A549 (cell line): ENCODE measurements at regions of chr14 and their contacts with region 1.

Region 1: GRCh38 chr14:22375321-22375930 is 213.6 kb downstream of the DAD1 start:
- DNase-seq: peak; percentile 21 to 70
- ATAC-seq: peak in 1 of 2 experiments; percentile 74; a peak in 3 of 6 replicates
- H3K4me3 ChIP-seq: no peak overlapping the region
- H3K27ac ChIP-seq: no peak overlapping the region
- H3K4me1 ChIP-seq: peaks cover under 1% of the 10 kb centered on the region; the same call in 2 of the 3 replicates
- CTCF ChIP-seq: peak; percentile 90
- EP300 ChIP-seq: no peak
- POLR2A ChIP-seq: no peak
- RAD21 ChIP-seq: peak; percentile 80 to 85

Region 2: GRCh38 chr14:22314181-22314820 is 61.1 kb before region 1 on chr14:
- CTCF ChIA-PET with region 1: interaction called, 138 read pairs
- POLR2A ChIA-PET with region 1: no interaction called
- DNase-seq: peak; percentile 46 to 71
- ATAC-seq: peak; percentile 95 to 97
- H3K4me3 ChIP-seq: no peak overlapping the region
- H3K27ac ChIP-seq: no peak overlapping the region
- H3K4me1 ChIP-seq: no peaks in the 10 kb centered on the region
- CTCF ChIP-seq: peak; percentile 78
- EP300 ChIP-seq: no peak
- POLR2A ChIP-seq: no peak
- RAD21 ChIP-seq: peak; percentile 77 to 78

Region 3: DNA sequence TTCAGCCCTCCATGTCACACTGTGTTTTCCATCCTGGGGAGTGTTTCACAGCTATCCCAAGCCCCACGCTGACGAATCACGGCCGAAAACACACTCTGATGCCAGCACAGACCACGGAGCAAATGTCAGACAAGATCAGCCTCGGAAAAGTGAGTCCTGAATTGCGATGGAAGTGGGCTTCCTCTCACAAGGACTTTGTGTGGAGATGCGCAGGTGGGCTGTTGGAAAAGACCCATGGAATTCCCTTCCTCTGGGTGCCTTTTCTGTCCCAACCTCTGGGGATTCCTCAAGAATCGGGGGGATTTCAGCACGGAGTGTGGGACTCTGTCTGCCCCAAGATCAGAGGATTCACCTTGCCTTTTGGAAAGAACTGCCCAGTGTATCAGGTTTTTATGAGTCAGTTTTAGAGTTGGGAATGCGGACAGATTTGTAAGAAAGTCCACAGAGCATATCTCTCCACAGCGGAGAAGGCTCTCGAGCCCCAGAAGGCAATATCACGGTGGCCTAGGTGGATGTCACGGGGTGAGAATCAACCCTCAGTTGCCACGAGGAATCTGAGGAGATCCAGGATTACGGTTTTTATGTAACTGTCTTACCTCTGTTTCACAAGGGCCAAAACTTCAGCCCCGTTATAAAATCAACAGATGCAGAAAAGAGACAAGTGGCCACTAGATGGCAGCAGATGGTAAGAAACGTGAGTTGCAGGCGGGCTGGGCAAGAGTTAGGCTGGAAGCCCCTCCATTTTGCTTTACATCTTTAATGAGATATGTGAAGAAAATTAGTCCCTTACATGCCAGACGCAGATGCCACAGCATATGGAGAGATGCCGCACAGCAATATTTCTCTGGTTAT is 11.7 kb after region 1 on chr14:
- CTCF ChIA-PET with region 1: interaction called, 15 read pairs
- POLR2A ChIA-PET with region 1: no interaction called
- DNase-seq: peak; percentile 72 to 82
- ATAC-seq: peak; percentile 55 to 78; a peak in 4 of 6 replicates
- H3K4me3 ChIP-seq: no peak overlapping the region
- H3K27ac ChIP-seq: no peak overlapping the region
- H3K4me1 ChIP-seq: peaks cover 32% of the 10 kb centered on the region
- CTCF ChIP-seq: peak; percentile 90
- EP300 ChIP-seq: no peak
- POLR2A ChIP-seq: no peak
- RAD21 ChIP-seq: peak; percentile 92 to 93